Activated naive CD4-positive, alpha-beta T cell treated with anti-CD3 and anti-CD28 coated beads for 36 hours (primary cell): ENCODE measurements at regions of chr13 and their contacts with region 1.

Region 1: GRCh38 chr13:21686751-21687391 is 16.0 kb downstream of the FGF9 start:
- DNase-seq: peak; percentile 60
- H3K4me3 Mint-ChIP-seq: no peak overlapping the region
- H3K27ac Mint-ChIP-seq: no peak overlapping the region
- H3K4me1 Mint-ChIP-seq: peaks cover 6% of the 10 kb centered on the region
- H3K27me3 Mint-ChIP-seq: no peaks in the 10 kb centered on the region

Region 2: GRCh38 chr13:21670883-21671619 is 15.8 kb before region 1 on chr13 and contains the start of gene FGF9:
- CTCF ChIA-PET with region 1: no interaction called
- intact Hi-C with region 1: loop called (anchors 2 kb)
- DNase-seq: peak; percentile 79
- H3K4me3 Mint-ChIP-seq: peak within 1 kb of the TSS; percentile 80
- H3K27ac Mint-ChIP-seq: no peak within 1 kb of the TSS
- H3K4me1 Mint-ChIP-seq: peaks cover 34% of the 10 kb centered on the region
- H3K27me3 Mint-ChIP-seq: peaks cover 32% of the 10 kb centered on the region
- total RNA-seq, gene FGF9: not detected